ENCODE measurements at regions of chr14 and their contacts with region 1.

Region 1: DNA sequence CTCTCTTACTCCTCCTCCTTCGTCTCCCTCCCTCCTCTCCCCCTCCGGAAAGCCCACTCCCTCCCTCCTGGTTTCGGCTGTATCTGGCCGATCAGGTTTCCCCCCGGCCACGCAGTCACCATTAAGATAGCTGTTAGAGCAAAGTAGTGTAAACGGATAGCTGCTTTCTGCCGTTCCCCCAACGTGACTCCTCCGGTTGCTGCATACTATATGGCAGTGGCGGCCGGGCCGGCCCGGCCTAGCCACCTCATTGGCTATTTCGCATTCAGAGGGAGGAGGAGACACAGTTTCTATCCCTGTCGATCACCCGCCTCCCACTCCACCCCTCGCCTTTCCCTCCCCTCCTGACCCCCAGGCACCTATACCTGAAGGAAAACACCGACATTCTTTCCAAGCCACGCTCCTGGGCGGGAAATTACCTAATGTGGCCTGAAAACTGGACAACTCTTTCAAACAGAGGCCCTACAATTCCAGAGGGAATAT is at the start of gene SIX4:
- DNase-seq: no peak
- ATAC-seq: peak; percentile 26
- H3K4me3 Mint-ChIP-seq: peak within 1 kb of the TSS; percentile 87
- H3K27ac Mint-ChIP-seq: no peak within 1 kb of the TSS
- H3K4me1 Mint-ChIP-seq: peaks cover 22% of the 10 kb centered on the region
- H3K27me3 Mint-ChIP-seq: peaks cover 73% of the 10 kb centered on the region
- CTCF ChIP-seq: no peak
- total RNA-seq, gene SIX4: not detected in 2 replicates

Region 2: GRCh38 chr14:59863806-59864525 is 860.2 kb before region 1 on chr14:
- CTCF ChIA-PET with region 1: no interaction called
- POLR2A ChIA-PET with region 1: no interaction called
- intact Hi-C with region 1: no loop called
- DNase-seq: no peak
- ATAC-seq: no peak
- H3K4me3 Mint-ChIP-seq: no peak overlapping the region
- H3K27ac Mint-ChIP-seq: no peak overlapping the region
- H3K4me1 Mint-ChIP-seq: no peaks in the 10 kb centered on the region
- H3K27me3 Mint-ChIP-seq: peaks cover 7% of the 10 kb centered on the region
- CTCF ChIP-seq: no peak

Region 3: GRCh38 chr14:60642270-60643140 is 81.7 kb before region 1 on chr14:
- CTCF ChIA-PET with region 1: no interaction called
- POLR2A ChIA-PET with region 1: no interaction called
- intact Hi-C with region 1: no loop called
- DNase-seq: no peak
- ATAC-seq: no peak
- H3K4me3 Mint-ChIP-seq: no peak overlapping the region
- H3K27ac Mint-ChIP-seq: no peak overlapping the region
- H3K4me1 Mint-ChIP-seq: peaks cover 16% of the 10 kb centered on the region
- H3K27me3 Mint-ChIP-seq: peaks cover 78% of the 10 kb centered on the region
- CTCF ChIP-seq: no peak

Region 4: DNA sequence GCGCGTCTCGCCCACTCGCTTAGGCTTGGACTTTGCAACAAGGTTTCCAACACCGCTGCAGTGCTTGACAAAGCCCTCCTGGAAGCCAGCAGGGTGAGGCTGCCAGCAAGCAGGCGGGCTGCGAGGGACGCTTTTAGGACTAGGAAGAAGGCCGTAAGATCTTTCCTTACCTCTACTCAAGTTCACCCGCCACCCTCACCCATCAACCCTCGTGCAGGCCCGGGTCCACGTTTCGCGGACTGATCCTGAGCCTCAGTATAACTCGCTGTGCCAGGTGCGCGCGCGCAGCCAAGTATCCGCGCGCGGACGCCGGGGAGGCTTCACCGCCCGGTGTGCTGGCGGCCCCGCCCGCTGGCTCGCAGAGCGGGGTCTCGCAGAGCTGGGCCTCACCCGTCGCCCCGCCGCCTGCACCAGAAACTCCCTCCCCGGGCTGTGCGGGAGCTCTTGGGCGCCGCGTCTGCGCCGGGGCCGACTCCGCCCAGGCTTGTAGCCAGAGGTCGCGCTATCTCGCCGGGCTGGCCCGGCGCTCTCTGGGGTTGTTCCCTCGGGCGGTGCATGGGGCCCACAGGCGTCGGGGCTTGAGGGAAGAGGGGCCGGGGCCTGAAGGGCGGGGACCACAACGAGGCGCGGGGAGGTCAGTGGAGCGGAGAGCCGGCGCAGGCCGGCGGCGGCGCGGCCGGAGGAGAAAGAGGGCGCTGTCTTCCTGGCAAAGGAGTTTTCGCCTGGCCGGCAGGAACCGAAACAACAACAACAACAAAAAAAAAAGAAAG is 67.3 kb before region 1 on chr14:
- CTCF ChIA-PET with region 1: no interaction called
- POLR2A ChIA-PET with region 1: interaction called, 6 read pairs
- intact Hi-C with region 1: loop called (anchors 2 kb)
- DNase-seq: peak; percentile 58
- ATAC-seq: peak; percentile 88
- H3K4me3 Mint-ChIP-seq: peak overlapping the region; percentile 90
- H3K27ac Mint-ChIP-seq: no peak overlapping the region
- H3K4me1 Mint-ChIP-seq: peaks cover 39% of the 10 kb centered on the region
- H3K27me3 Mint-ChIP-seq: peaks cover 68% of the 10 kb centered on the region
- CTCF ChIP-seq: no peak

Region 5: DNA sequence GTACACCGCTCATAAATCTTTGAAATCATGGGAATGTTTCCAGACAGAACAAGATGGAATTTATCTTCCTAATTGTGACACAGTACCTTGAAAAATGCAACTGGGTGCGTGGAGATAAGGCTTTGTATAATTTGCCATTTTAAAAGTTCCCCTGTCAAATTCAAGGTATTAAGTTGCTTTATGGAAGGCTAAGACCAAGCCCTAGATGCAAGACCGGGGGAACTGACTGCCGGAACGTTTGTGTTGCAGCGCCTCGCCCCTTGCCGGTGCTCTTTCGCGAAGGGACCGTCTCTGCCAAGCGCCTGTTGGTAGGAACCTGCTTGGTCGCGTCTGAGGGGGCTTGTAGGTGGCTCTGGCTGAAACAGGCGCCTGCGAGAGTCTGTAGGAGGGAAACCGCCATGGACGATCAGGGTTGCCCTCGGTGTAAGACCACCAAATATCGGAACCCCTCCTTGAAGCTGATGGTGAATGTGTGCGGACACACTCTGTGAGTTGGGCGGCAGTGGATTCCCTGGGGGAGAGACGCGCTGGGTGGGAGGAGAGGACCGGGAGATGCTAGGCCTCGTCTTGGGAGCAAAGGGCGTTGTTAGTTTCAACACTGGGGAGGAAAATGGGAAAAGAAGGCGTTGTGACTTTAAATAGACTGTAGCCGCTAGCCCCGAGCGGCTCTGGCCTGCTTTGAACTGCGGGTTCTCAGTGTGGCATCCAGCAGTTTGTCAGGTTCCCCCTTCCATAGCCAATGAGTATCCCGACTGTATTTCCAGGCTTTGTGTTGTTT is 10.5 kb after region 1 on chr14 and contains the start of gene MNAT1:
- CTCF ChIA-PET with region 1: interaction called, 6 read pairs
- POLR2A ChIA-PET with region 1: interaction called, 3 read pairs
- intact Hi-C with region 1: loop called (anchors 1 kb)
- DNase-seq: peak; percentile 74
- ATAC-seq: peak; percentile 98
- H3K4me3 Mint-ChIP-seq: peak within 1 kb of the TSS; percentile 100
- H3K27ac Mint-ChIP-seq: peak within 1 kb of the TSS; percentile 93
- H3K4me1 Mint-ChIP-seq: peaks cover 25% of the 10 kb centered on the region
- H3K27me3 Mint-ChIP-seq: peaks cover 21% of the 10 kb centered on the region
- CTCF ChIP-seq: no peak
- total RNA-seq, gene MNAT1: 33.6 and 37.1 TPM in 2 replicates

Region 6: DNA sequence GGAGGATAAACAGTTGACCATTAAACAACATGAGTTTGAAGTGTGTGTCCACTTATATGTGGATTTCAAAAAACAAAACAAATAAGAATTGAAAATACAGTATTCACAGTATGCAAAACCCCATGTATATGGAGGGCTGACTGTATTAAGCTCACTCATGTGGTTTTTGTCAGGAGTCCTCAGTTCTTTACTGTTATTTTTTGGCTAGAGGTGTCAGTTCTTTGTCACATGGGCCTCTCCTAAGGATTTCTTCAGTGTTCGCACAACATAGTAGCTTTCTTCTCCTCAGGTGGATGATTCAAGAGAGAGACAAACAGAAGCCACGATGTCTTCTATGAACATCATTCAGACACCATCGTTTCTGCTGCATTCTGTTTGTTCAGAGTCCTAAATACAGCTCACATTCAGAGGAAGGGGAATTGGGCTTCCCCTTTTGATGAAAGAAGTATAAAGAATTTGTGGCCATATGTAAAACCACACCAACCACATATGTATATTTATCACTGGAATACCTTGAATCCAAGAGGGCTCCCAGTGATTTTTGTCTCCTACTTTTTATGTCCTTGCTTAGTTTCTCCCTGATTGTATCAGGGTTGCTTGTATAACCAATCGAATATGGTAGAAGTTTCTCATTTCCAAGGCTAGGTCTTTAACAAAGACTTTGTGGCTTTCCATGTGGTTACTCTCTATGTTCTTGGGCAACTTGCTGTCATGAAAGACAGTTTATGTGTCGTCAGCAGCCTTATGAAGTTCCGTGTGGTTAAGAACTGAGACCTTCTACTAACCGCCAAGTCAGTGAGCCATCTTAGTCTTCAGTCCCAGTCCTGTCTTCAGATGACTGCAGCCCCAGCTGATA is 29.3 kb after region 1 on chr14:
- CTCF ChIA-PET with region 1: interaction called, 3 read pairs
- POLR2A ChIA-PET with region 1: interaction called, 4 read pairs
- intact Hi-C with region 1: loop called (anchors 1 kb)
- DNase-seq: no peak
- ATAC-seq: peak; percentile 95
- H3K4me3 Mint-ChIP-seq: peak overlapping the region; percentile 52
- H3K27ac Mint-ChIP-seq: peak overlapping the region; percentile 81
- H3K4me1 Mint-ChIP-seq: peaks cover 42% of the 10 kb centered on the region
- H3K27me3 Mint-ChIP-seq: no peaks in the 10 kb centered on the region
- CTCF ChIP-seq: no peak

Region 7: GRCh38 chr14:60845523-60845922 is 121.3 kb after region 1 on chr14:
- CTCF ChIA-PET with region 1: no interaction called
- POLR2A ChIA-PET with region 1: no interaction called
- intact Hi-C with region 1: loop called (anchors 5 kb)
- DNase-seq: no peak
- ATAC-seq: peak; percentile 83
- H3K4me3 Mint-ChIP-seq: peak overlapping the region; percentile 64
- H3K27ac Mint-ChIP-seq: peak overlapping the region; percentile 92
- H3K4me1 Mint-ChIP-seq: peaks cover 23% of the 10 kb centered on the region
- H3K27me3 Mint-ChIP-seq: no peaks in the 10 kb centered on the region
- CTCF ChIP-seq: no peak

Region 8: DNA sequence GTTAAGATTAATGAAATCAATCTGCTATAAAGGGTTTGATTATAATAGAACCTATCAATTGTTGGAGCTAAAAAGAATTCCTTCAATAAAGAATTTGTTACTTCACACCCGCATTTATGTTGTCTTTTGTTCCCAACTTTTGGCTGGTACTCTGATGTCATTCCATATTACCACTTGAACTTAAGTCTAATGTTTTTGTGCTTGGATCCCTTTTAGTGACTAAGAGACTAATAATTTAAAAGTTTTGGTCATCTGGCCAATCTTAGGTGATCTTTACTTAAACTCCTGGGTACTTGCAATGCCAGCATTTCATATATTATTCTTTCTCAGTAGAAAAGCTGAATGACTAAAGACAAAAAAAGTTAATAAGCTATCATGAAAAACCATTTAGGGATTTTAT is 444.0 kb after region 1 on chr14:
- CTCF ChIA-PET with region 1: no interaction called
- POLR2A ChIA-PET with region 1: no interaction called
- intact Hi-C with region 1: no loop called
- DNase-seq: no peak
- ATAC-seq: no peak
- H3K4me3 Mint-ChIP-seq: no peak overlapping the region
- H3K27ac Mint-ChIP-seq: no peak overlapping the region
- H3K4me1 Mint-ChIP-seq: no peaks in the 10 kb centered on the region
- H3K27me3 Mint-ChIP-seq: peaks cover 11% of the 10 kb centered on the region
- CTCF ChIP-seq: no peak

Region 9: GRCh38 chr14:61395115-61395725 is 671.0 kb after region 1 on chr14:
- CTCF ChIA-PET with region 1: no interaction called
- POLR2A ChIA-PET with region 1: no interaction called
- intact Hi-C with region 1: no loop called
- DNase-seq: no peak
- ATAC-seq: no peak
- H3K4me3 Mint-ChIP-seq: no peak overlapping the region
- H3K27ac Mint-ChIP-seq: no peak overlapping the region
- H3K4me1 Mint-ChIP-seq: peaks cover 13% of the 10 kb centered on the region
- H3K27me3 Mint-ChIP-seq: peaks cover 2% of the 10 kb centered on the region
- CTCF ChIP-seq: no peak

Measured in activated B cell treated with CpG ODN at 0.5 μM for 24 hours (primary cell).